ENCODE measurements at regions of chr5 and their contacts with region 1.

Region 1: DNA sequence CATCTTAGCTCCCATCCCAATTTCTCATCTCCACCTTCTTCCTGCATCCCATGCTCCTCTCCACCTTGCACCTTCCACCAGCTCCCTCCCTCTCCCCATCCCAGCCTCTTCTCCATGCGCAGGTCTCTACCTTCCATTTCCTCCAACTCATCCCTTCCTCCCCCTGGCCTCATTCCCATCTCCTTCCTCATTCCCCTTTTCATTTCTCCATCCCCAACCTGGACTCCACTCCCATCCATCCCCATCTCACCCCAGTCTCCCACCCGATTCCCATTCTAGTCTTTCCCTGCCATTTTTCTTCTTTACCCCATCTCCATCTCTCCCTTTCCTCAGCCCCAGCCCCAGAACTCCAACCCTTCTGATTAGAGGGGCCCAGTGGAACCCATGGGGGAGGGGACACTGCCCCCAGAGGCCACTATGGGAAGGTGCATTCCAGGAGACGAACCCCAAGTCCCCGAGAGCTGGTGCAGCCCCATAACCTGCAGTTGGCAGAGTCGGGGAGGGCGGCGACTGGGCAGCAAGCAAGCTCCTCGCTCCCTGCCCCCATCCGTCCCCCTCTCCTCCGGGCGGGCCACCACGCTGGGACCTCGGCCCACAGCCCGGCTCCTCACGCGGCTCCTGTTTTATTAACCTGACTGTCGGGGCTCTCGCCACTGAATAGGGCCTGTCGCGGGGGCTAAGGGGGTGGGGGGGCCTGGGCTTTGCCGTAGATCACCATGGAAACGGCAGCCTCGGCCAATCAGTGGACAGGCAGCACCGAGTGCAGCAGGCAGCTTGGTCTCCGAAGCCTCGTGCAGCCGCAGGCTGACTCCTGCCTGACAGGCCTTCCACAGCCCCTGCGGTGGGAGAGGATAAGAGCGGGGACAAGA is 66.7 kb downstream of the PCDH1 start:
- DNase-seq: peak; percentile 45 to 81 (median 68)
- H3K4me3 ChIP-seq: peak overlapping the region in 48 of 59 donors; percentile 4 to 53 (median 32)
- H3K27ac ChIP-seq: peak overlapping the region in 52 of 59 donors; percentile 16 to 84 (median 69)
- H3K27me3 ChIP-seq: no peaks in the 10 kb centered on the region
- CTCF ChIP-seq: peak in 55 of 56 donors; percentile 25 to 71 (median 57)

Region 2: DNA sequence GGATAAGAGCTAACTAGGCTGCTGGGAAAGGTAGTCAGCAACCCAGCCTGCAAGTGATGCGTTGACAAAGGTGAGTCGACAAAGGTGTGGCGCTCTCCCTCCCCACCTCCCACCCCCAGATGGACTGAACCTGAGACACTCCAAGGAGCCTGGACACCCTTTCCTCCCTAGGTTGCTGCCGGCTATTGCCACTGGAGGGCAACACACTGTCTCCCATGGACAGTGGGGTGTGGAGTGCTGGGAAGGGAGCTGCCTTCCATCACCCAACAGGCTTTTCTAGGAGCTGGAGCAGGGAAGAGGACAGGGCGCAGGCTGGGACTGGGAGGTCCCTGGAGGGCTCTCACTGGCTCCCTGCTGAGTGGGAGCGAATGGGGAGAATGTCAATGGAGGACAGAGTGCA is 54.1 kb before region 1 on chr5:
- intact Hi-C with region 1: loop called in 1 of 2 experiments (anchors 5 kb)
- DNase-seq: peak in 2 of 10 donors; percentile 32 to 51
- H3K4me3 ChIP-seq: no peak overlapping the region
- H3K27ac ChIP-seq: peak overlapping the region in 39 of 59 donors; percentile 13 to 82 (median 66)
- H3K27me3 ChIP-seq: peaks cover 0 to 2% (median 0%) of the 10 kb centered on the region in 45 donors
- CTCF ChIP-seq: peak in 52 of 56 donors; percentile 12 to 59 (median 44)